AG04449 (cell line): ENCODE measurements at regions of chr1 and their contacts with region 1.

Region 1: GRCh38 chr1:31548907-31549808 is 27.2 kb upstream of the TINAGL1 start:
- DNase-seq: no peak
- H3K4me3 ChIP-seq: peak overlapping the region; percentile 31
- CTCF ChIP-seq: peak; percentile 84

Region 2: DNA sequence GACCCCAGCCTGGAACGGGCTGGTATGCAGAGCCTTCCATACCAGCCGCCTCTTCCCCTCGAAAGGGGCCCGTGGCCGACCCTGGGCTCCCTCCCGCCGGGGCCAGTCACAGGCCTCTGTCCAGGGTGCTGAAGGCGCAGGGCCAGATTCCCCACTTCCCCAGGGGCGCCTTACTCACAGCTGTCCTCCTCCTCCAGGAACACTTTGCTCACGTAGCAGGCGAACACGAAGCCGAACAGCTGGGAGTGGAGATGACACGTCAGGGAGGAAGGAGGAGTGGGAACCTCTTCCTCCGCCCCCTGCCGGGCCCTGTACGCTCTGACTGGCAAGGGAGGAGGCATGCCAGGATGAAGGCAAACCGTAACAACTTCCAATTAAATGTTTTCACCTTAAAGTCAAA is 366.8 kb before region 1 on chr1:
- CTCF ChIA-PET with region 1: interaction called, 46 read pairs
- POLR2A ChIA-PET with region 1: no interaction called
- DNase-seq: peak; percentile 63
- H3K4me3 ChIP-seq: 0 out of 2 replicates have a peak overlapping the region, but pooled peaks have one; percentile 6
- CTCF ChIP-seq: peak; percentile 24

Region 3: DNA sequence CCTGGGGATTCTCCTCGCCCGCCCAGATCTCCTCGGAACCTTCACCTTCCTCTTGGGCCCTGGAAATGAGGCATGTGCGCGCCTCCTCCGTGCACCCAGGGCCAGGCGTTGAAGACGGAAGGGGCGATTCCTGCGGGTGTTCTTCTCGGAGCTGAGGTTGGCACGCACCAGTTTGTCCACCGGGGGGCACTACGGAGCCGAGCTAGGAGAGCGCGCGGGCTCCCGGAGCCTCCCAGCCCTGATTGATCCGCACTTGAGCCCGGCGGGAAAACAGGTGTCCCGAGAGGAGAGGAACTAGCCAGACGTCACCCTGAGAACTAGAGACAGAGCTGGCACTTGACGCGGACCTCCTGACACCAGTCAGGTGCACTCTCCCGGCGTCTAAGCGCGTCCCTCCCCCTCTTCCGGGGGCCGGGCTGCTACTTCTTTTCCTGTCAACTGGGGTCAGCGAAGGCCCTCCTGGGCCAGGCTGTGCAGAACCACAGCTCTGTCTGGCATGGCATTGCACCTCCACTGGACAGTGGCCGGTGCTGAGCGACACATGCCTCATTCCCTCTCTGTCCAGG is 154.4 kb before region 1 on chr1:
- CTCF ChIA-PET with region 1: interaction called, 116 read pairs
- POLR2A ChIA-PET with region 1: no interaction called
- DNase-seq: no peak
- H3K4me3 ChIP-seq: peak overlapping the region; percentile 12; the same call in 1 of the 2 replicates
- CTCF ChIP-seq: peak; percentile 90

Region 4: GRCh38 chr1:31422505-31423319 is 126.4 kb before region 1 on chr1:
- CTCF ChIA-PET with region 1: interaction called, 61 read pairs
- POLR2A ChIA-PET with region 1: no interaction called
- DNase-seq: no peak
- H3K4me3 ChIP-seq: no peak overlapping the region
- CTCF ChIP-seq: peak; percentile 92

Region 5: GRCh38 chr1:31564134-31564989 is 15.2 kb after region 1 on chr1:
- CTCF ChIA-PET with region 1: interaction called, 14 read pairs
- POLR2A ChIA-PET with region 1: no interaction called
- DNase-seq: no peak
- H3K4me3 ChIP-seq: no peak overlapping the region
- CTCF ChIP-seq: peak; percentile 80

Region 6: GRCh38 chr1:31637915-31638673 is 88.9 kb after region 1 on chr1:
- CTCF ChIA-PET with region 1: no interaction called
- POLR2A ChIA-PET with region 1: no interaction called
- DNase-seq: no peak
- H3K4me3 ChIP-seq: no peak overlapping the region
- CTCF ChIP-seq: no peak

Region 7: GRCh38 chr1:31934706-31935629 is 385.8 kb after region 1 on chr1:
- CTCF ChIA-PET with region 1: no interaction called
- POLR2A ChIA-PET with region 1: no interaction called
- DNase-seq: no peak
- H3K4me3 ChIP-seq: peak overlapping the region; percentile 97
- CTCF ChIP-seq: no peak